Gastrocnemius medialis (tissue), 4 donors: ENCODE measurements at regions of chr2 and their contacts with region 1.

Region 1: DNA sequence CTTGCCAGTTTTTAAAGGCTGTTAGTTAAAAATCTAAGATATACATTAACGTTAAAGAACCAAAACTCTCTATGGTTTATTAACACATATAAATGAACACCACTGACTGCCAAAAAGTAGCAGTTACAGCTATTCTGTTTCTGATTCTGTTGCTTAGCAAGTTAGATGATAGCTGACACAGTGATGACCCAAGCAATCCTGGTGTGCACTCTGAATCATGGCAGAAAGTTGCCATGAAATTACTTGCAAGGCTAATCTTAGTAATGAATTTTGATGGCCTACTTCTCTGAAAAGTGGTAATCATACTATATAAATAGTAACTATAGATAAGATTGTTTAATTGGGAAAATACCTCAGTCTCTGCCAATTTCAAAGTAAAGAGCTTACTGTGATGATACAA is 57.7 kb downstream of the ROCK2 start:
- DNase-seq: peak; percentile 20 to 30
- ATAC-seq: peak; percentile 85 to 94
- H3K4me3 ChIP-seq: no peak overlapping the region
- H3K27ac ChIP-seq: peak overlapping the region; percentile 53 to 83 (median 76)
- H3K4me1 ChIP-seq: peaks cover 47 to 51% of the 10 kb centered on the region in 2 donors
- H3K27me3 ChIP-seq: no peaks in the 10 kb centered on the region
- CTCF ChIP-seq: no peak
- POLR2A ChIP-seq: no peak

Region 2: GRCh38 chr2:10977003-10977402 is 309.7 kb before region 1 on chr2:
- in situ Hi-C with region 1: no loop called
- intact Hi-C with region 1: no loop called
- DNase-seq: no peak
- ATAC-seq: no peak
- H3K4me3 ChIP-seq: no peak overlapping the region
- H3K27ac ChIP-seq: no peak overlapping the region
- H3K4me1 ChIP-seq: no peaks in the 10 kb centered on the region
- H3K27me3 ChIP-seq: peaks cover 6 to 15% (median 10%) of the 10 kb centered on the region in 3 donors
- CTCF ChIP-seq: no peak
- POLR2A ChIP-seq: no peak

Region 3: GRCh38 chr2:11329781-11330180 is 43.0 kb after region 1 on chr2:
- in situ Hi-C with region 1: no loop called
- intact Hi-C with region 1: loop called (anchors 5 kb)
- DNase-seq: no peak
- ATAC-seq: peak in 1 of 2 donors; percentile 31
- H3K4me3 ChIP-seq: peak overlapping the region in 1 of 4 donors; percentile 5
- H3K27ac ChIP-seq: peak overlapping the region; percentile 64 to 69 (median 65)
- H3K4me1 ChIP-seq: peaks cover 53 to 80% of the 10 kb centered on the region in 2 donors
- H3K27me3 ChIP-seq: no peaks in the 10 kb centered on the region
- CTCF ChIP-seq: no peak
- POLR2A ChIP-seq: no peak